MCF 10A (cell line): ENCODE measurements at regions of chr2 and their contacts with region 1.

Region 1: GRCh38 chr2:218876562-218877219 is 4.0 kb upstream of the WNT10A start:
- DNase-seq: peak; percentile 80
- H3K4me3 Mint-ChIP-seq: no peak overlapping the region
- H3K27ac Mint-ChIP-seq: no peak overlapping the region
- H3K4me1 Mint-ChIP-seq: peaks cover 4% of the 10 kb centered on the region
- H3K27me3 Mint-ChIP-seq: peaks cover 19% of the 10 kb centered on the region
- CTCF ChIP-seq: peak; percentile 96

Region 2: DNA sequence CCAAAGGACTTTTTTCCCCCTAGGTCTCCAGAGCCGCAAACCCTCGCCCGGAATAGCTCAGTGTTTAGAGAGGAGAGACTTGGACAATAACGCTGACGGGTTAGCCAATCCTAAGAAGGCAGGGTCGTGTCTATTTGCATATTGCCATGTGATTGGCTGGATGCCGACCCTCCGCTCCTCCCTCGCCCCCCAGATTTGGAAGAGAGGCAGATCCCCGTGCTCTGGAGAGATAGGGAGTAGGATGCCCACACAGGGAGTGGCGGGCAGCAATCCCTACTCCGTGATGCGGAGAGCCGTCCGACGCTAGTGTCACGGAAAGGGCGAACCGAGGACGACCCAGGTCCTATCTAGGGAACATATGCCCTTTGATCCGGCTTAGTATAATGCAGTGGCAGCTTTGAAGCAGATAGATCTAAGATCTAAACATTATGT is 15.7 kb before region 1 on chr2:
- CTCF ChIA-PET with region 1: interaction called, 44 read pairs
- POLR2A ChIA-PET with region 1: interaction called, 4 read pairs
- intact Hi-C with region 1: no loop called
- DNase-seq: no peak
- H3K4me3 Mint-ChIP-seq: no peak overlapping the region
- H3K27ac Mint-ChIP-seq: no peak overlapping the region
- H3K4me1 Mint-ChIP-seq: peaks cover 5% of the 10 kb centered on the region
- H3K27me3 Mint-ChIP-seq: peaks cover 70% of the 10 kb centered on the region
- CTCF ChIP-seq: no peak

Region 3: GRCh38 chr2:218898109-218898878 is 21.6 kb after region 1 on chr2:
- CTCF ChIA-PET with region 1: interaction called, 839 read pairs
- POLR2A ChIA-PET with region 1: interaction called, 237 read pairs
- intact Hi-C with region 1: loop called (anchors 1 kb)
- DNase-seq: peak; percentile 53
- H3K4me3 Mint-ChIP-seq: no peak overlapping the region
- H3K27ac Mint-ChIP-seq: no peak overlapping the region
- H3K4me1 Mint-ChIP-seq: peaks cover 43% of the 10 kb centered on the region
- H3K27me3 Mint-ChIP-seq: peaks cover 23% of the 10 kb centered on the region
- CTCF ChIP-seq: peak; percentile 97

Region 4: DNA sequence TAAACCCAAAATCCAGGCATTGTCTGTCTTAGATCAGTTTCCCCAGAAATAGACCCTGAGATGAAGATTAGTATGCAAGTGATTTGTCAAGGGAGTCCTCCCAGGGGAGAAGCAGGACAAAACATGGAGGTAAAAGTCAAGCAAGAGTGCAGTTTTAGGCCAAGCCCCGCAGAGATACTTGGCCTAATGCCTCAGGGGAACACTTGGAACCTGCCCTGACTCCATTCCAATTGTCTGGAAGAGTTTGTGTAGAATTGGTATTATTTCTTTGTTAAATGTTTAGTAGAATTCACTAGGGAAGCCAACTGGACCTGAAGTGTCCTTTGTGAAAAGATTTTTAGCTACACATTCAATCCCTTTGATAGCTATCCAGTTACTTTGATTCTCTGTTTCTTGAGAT is 38.3 kb after region 1 on chr2:
- CTCF ChIA-PET with region 1: interaction called, 12 read pairs
- POLR2A ChIA-PET with region 1: no interaction called
- intact Hi-C with region 1: no loop called
- DNase-seq: no peak
- H3K4me3 Mint-ChIP-seq: no peak overlapping the region
- H3K27ac Mint-ChIP-seq: no peak overlapping the region
- H3K4me1 Mint-ChIP-seq: no peaks in the 10 kb centered on the region
- H3K27me3 Mint-ChIP-seq: peaks cover 36% of the 10 kb centered on the region
- CTCF ChIP-seq: no peak

Region 5: DNA sequence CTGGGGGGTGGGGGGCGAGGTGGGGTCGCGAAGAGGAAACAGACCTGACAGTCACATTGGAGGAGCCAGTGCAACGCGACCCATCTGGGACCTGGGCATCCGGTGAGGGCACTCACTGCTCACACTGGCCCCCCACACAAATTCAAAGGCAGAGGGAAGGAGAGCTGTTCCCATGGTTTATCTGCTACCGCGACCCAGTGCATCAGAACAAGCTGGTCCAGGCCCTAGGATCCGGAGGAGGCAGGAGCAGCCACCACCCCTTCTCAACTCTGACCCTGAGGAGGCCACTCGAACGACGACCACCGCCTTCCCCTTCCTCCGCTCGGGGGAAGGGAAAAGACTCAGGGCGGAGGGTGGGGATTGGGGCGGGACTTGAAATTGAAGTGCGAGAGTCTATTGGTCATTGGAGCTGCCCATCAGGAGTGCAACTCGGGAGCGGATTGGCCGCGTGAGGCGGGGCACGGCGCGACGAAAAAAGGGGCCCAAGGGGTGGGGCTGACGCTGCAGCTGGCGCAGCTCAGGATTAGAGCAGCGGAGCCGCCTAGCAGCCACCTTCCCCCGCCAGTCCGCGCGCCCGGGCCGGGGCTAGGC is 82.5 kb after region 1 on chr2 and contains the start of gene CDK5R2:
- CTCF ChIA-PET with region 1: interaction called, 10 read pairs
- POLR2A ChIA-PET with region 1: no interaction called
- intact Hi-C with region 1: no loop called
- DNase-seq: peak; percentile 82
- H3K4me3 Mint-ChIP-seq: peak within 1 kb of the TSS; percentile 70
- H3K27ac Mint-ChIP-seq: no peak within 1 kb of the TSS
- H3K4me1 Mint-ChIP-seq: peaks cover 13% of the 10 kb centered on the region
- H3K27me3 Mint-ChIP-seq: peaks cover 80% of the 10 kb centered on the region
- CTCF ChIP-seq: no peak
- total RNA-seq, gene CDK5R2: not detected in 2 replicates

Region 6: GRCh38 chr2:218995972-218996711 is 119.5 kb after region 1 on chr2:
- CTCF ChIA-PET with region 1: interaction called, 20 read pairs
- POLR2A ChIA-PET with region 1: no interaction called
- intact Hi-C with region 1: no loop called
- DNase-seq: peak; percentile 82
- H3K4me3 Mint-ChIP-seq: peak overlapping the region; percentile 73
- H3K27ac Mint-ChIP-seq: no peak overlapping the region
- H3K4me1 Mint-ChIP-seq: peaks cover 15% of the 10 kb centered on the region
- H3K27me3 Mint-ChIP-seq: peaks cover 22% of the 10 kb centered on the region
- CTCF ChIP-seq: peak; percentile 84